Vagina (tissue), 2 donors: ENCODE measurements at regions of chr1 and their contacts with region 1.

Region 1: GRCh38 chr1:226827968-226828513 is 42.4 kb upstream of the PSEN2 start:
- DNase-seq: peak; percentile 92 to 93
- H3K4me3 ChIP-seq: peak overlapping the region in 1 of 2 donors; percentile 1
- H3K27ac ChIP-seq: peak overlapping the region; percentile 95
- H3K4me1 ChIP-seq: peaks cover 17% of the 10 kb centered on the region
- H3K27me3 ChIP-seq: no peaks in the 10 kb centered on the region
- CTCF ChIP-seq: peak; percentile 86 to 98 (median 95)
- POLR2A ChIP-seq: no peak

Region 2: DNA sequence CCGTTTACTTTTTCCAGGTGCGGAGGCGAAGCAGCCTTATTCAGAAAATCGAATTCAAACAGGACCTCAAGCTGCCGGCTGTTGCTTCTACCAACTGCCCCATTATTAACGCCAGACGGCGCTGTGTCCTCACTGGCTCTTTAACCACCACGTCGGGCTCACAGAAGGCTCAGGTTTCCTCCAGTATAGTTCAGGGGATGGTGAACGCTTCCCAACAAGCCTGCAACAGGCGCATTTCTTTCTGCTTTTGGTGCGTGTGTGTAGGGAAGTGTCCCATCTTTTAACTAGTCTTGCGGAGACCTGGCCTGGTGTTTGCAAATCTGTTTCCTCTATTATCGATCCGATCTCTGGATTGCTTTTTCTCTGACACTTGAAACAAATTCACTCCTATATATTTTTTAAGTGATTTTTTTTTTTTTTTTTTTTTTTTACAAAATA is 280.3 kb before region 1 on chr1:
- intact Hi-C with region 1: loop called (anchors 2 kb)
- DNase-seq: no peak
- H3K4me3 ChIP-seq: peak overlapping the region; percentile 46 to 69
- H3K27ac ChIP-seq: peak overlapping the region; percentile 17
- H3K4me1 ChIP-seq: peaks cover 24% of the 10 kb centered on the region
- H3K27me3 ChIP-seq: no peaks in the 10 kb centered on the region
- CTCF ChIP-seq: peak; percentile 52 to 85 (median 74)
- POLR2A ChIP-seq: no peak

Region 3: GRCh38 chr1:226626577-226626956 is 201.5 kb before region 1 on chr1:
- intact Hi-C with region 1: loop called (anchors 2 kb)
- DNase-seq: no peak
- H3K4me3 ChIP-seq: no peak overlapping the region
- H3K27ac ChIP-seq: peak overlapping the region; percentile 26
- H3K4me1 ChIP-seq: peaks cover 11% of the 10 kb centered on the region
- H3K27me3 ChIP-seq: no peaks in the 10 kb centered on the region
- CTCF ChIP-seq: peak; percentile 76 to 90 (median 86)
- POLR2A ChIP-seq: no peak

Region 4: GRCh38 chr1:226634166-226634588 is 193.9 kb before region 1 on chr1:
- intact Hi-C with region 1: loop called (anchors 2 kb)
- DNase-seq: no peak
- H3K4me3 ChIP-seq: no peak overlapping the region
- H3K27ac ChIP-seq: peak overlapping the region; percentile 60
- H3K4me1 ChIP-seq: peaks cover 58% of the 10 kb centered on the region
- H3K27me3 ChIP-seq: no peaks in the 10 kb centered on the region
- CTCF ChIP-seq: peak; percentile 94 to 97 (median 94)
- POLR2A ChIP-seq: no peak

Region 5: GRCh38 chr1:226649780-226650179 is 178.3 kb before region 1 on chr1:
- intact Hi-C with region 1: loop called (anchors 5 kb)
- DNase-seq: no peak
- H3K4me3 ChIP-seq: no peak overlapping the region
- H3K27ac ChIP-seq: peak overlapping the region; percentile 43
- H3K4me1 ChIP-seq: peaks cover 34% of the 10 kb centered on the region
- H3K27me3 ChIP-seq: no peaks in the 10 kb centered on the region
- CTCF ChIP-seq: peak in 1 of 3 experiments; percentile 13
- POLR2A ChIP-seq: no peak

Region 6: DNA sequence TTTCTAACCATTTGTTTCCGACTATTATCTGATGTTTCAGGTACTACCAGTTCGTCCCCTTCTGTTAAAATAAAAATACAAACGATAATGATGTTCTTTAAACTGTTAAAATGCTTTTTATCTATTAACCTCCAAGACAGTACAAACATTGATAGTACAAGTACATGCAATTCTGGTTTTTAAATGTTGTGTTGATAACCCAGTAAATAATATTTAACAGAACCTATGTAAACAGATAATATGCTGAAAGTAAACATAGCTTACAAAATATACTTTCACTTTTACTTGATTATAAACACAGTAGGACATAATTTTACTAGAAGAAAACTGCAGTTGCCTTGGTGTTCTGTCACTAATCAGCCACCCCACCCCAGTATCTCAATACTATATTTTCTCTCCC is 188.9 kb after region 1 on chr1:
- intact Hi-C with region 1: no loop called
- DNase-seq: no peak
- H3K4me3 ChIP-seq: no peak overlapping the region
- H3K27ac ChIP-seq: no peak overlapping the region
- H3K4me1 ChIP-seq: no peaks in the 10 kb centered on the region
- H3K27me3 ChIP-seq: no peaks in the 10 kb centered on the region
- CTCF ChIP-seq: no peak
- POLR2A ChIP-seq: no peak

Region 7: DNA sequence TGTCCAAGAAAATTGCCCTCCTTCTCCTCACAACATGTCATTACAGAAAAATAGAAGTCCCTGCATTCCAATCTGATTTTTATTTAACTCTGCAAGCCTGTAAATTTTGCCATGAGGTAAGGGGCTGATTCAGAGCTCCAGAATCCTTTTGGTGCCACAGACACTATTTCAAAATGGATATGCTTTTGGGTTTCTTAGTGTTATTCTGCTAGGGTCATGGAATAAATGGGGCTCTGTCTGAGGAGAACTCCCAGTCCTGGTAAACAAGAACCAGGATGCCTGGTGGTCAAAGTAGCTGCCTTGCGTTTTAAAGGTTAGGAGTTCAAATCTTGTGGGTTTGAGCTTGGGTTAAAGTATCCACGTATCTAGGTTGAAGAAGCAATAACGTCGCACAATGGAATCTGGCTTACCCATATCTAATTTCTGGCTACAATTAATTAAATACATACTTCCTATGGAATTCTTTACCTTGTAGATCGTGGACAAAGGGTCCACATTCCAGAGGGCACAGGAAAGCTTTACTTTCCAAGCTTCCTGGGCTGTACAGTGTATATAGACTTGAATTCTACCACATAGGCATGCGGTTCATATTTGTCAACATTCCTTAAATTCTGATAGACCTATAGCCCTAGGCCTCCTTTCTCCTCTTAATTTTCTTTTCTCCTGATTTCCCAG is 588.3 kb after region 1 on chr1:
- intact Hi-C with region 1: no loop called
- DNase-seq: no peak
- H3K4me3 ChIP-seq: no peak overlapping the region
- H3K27ac ChIP-seq: no peak overlapping the region
- H3K4me1 ChIP-seq: no peaks in the 10 kb centered on the region
- H3K27me3 ChIP-seq: no peaks in the 10 kb centered on the region
- CTCF ChIP-seq: no peak
- POLR2A ChIP-seq: no peak